ENCODE measurements at regions of chr4 and their contacts with region 1.

Region 1: DNA sequence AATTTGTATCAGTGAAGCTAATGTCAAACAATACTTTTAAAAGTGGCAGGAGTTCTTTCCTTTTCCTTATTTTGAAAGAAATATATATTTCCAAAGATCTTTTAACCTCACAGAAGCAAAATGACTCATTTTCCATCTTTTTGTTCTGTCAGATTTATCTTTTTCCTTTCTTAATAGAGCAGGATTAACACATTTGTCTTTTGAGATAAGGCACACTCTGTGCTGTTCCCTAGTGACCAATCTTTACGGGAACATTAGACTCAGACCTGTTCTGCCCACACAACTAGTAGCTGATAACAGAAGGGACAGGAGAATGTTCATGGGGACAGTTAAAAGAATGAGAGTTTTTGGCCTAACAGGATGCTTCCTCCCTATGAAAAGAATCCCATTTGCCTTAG is 381.2 kb downstream of the STPG2 start:
- DNase-seq: no peak
- H3K4me3 ChIP-seq: no peak overlapping the region
- H3K27ac ChIP-seq: no peak overlapping the region
- H3K4me1 ChIP-seq: no peaks in the 10 kb centered on the region
- H3K27me3 ChIP-seq: no peaks in the 10 kb centered on the region
- CTCF ChIP-seq: no peak

Region 2: GRCh38 chr4:97317671-97318070 is 444.4 kb before region 1 on chr4:
- CTCF ChIA-PET with region 1: no interaction called
- dilution Hi-C with region 1: no loop called
- in situ Hi-C with region 1: no loop called
- intact Hi-C with region 1: no loop called
- DNase-seq: no peak
- H3K4me3 ChIP-seq: no peak overlapping the region
- H3K27ac ChIP-seq: no peak overlapping the region
- H3K4me1 ChIP-seq: no peaks in the 10 kb centered on the region
- H3K27me3 ChIP-seq: no peaks in the 10 kb centered on the region
- CTCF ChIP-seq: no peak

Region 3: GRCh38 chr4:97879942-97880341 is 117.8 kb after region 1 on chr4:
- CTCF ChIA-PET with region 1: no interaction called
- dilution Hi-C with region 1: no loop called
- in situ Hi-C with region 1: no loop called
- intact Hi-C with region 1: loop called (anchors 5 kb)
- DNase-seq: no peak
- H3K4me3 ChIP-seq: no peak overlapping the region
- H3K27ac ChIP-seq: no peak overlapping the region
- H3K4me1 ChIP-seq: no peaks in the 10 kb centered on the region
- H3K27me3 ChIP-seq: no peaks in the 10 kb centered on the region
- CTCF ChIP-seq: no peak

Measured in mammary epithelial cell (primary cell).